Left colon (tissue), 2 donors: ENCODE measurements at regions of chr21 and their contacts with region 1.

Region 1: GRCh38 chr21:15826147-15826780 is 96.5 kb downstream of the USP25 start:
- DNase-seq: no peak
- ATAC-seq: peak; percentile 95

Region 2: DNA sequence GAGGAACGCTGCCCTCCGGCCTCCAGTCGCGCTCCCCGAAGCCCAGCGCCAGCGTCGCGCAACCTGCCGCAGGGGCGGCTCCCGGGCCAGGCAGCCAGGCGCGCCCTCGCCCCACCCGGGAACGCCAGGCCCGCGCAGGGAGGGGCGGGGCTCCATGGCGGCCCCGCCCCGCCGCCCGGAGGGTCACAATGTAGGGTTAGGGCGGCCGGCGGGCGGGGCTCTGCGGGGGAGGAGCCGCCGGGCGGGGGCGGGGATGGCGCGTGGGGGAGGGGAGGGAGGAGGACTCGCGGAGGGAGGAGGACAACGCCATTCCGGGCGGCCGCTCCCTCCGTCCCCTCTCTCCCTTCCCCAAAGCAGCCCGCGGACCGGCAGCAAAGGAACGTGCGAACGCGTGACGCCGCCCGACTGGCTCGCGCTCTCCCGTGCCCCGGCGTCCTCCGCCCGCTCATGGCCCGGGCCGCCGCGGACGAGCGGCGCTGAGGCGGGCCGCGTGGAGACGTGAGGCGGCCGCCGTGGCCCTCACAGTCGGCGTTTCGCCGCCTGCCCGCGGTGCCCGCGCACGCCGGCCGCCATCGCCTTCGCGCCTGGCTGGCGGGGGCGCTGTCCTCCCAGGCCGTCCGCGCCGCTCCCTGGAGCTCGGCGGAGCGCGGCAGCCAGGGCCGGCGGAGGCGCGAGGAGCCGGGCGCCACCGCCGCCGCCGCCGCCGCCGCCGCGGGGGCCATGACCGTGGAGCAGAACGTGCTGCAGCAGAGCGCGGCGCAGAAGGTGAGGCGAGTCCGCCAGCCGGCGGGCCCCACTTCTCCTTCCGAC is 96.4 kb before region 1 on chr21 and contains the start of gene USP25:
- intact Hi-C with region 1: loop called in 1 of 2 experiments (anchors 5 kb)
- DNase-seq: peak; percentile 90 to 93
- ATAC-seq: peak; percentile 91
- total RNA-seq, gene USP25: 33.8 to 38.9 TPM